ENCODE measurements at regions of chr1 and their contacts with region 1.

Region 1: DNA sequence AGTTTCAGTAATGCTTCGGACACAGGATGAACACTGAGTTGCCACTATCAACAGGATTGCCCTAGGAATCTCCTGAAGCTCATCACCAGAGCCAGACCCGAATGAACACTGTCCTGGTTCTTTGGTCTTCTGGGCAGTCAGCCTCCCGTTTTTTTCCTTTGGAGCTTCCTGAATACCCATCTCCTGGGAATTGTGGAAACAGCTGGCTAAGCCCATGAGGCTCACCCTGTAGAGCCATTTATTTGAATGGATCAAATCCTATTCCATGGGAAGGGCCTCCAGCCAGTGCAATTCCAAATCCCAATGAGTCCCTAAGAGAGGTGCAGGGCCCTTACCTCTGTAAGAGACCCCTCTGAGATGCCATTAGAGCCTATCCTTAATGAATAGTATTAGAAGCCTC is 5.9 kb downstream of the RCSD1 start:
- DNase-seq: no peak
- H3K4me3 Mint-ChIP-seq: no peak overlapping the region
- H3K27ac Mint-ChIP-seq: peak overlapping the region; percentile 80
- H3K4me1 Mint-ChIP-seq: peaks cover 86% of the 10 kb centered on the region
- H3K27me3 Mint-ChIP-seq: no peaks in the 10 kb centered on the region

Region 2: GRCh38 chr1:167095368-167095767 is 540.6 kb before region 1 on chr1:
- CTCF ChIA-PET with region 1: no interaction called
- POLR2A ChIA-PET with region 1: no interaction called
- DNase-seq: no peak
- H3K4me3 Mint-ChIP-seq: no peak overlapping the region
- H3K27ac Mint-ChIP-seq: no peak overlapping the region
- H3K4me1 Mint-ChIP-seq: peaks cover 7% of the 10 kb centered on the region
- H3K27me3 Mint-ChIP-seq: peaks cover 5% of the 10 kb centered on the region

Region 3: GRCh38 chr1:167617153-167618147 is 18.5 kb before region 1 on chr1:
- CTCF ChIA-PET with region 1: interaction called, 8 read pairs
- POLR2A ChIA-PET with region 1: interaction called, 166 read pairs
- DNase-seq: peak; percentile 48
- H3K4me3 Mint-ChIP-seq: peak overlapping the region; percentile 73
- H3K27ac Mint-ChIP-seq: peak overlapping the region; percentile 93
- H3K4me1 Mint-ChIP-seq: peaks cover 61% of the 10 kb centered on the region
- H3K27me3 Mint-ChIP-seq: no peaks in the 10 kb centered on the region

Measured in activated CD4-positive, alpha-beta memory T cell treated with anti-CD3 and anti-CD28 coated beads, Interleukin-2, amount 10 ng/mL, durations not matched to agents 7 days and 5 days (primary cell).